ENCODE measurements at regions of chr18 and their contacts with region 1.

Region 1: GRCh38 chr18:22983175-22983574 is 50.0 kb downstream of the RBBP8 start:
- DNase-seq: no peak

Region 2: GRCh38 chr18:22790545-22791309 is 192.4 kb before region 1 on chr18:
- intact Hi-C with region 1: loop called (anchors 10 kb)
- DNase-seq: no peak

Region 3: DNA sequence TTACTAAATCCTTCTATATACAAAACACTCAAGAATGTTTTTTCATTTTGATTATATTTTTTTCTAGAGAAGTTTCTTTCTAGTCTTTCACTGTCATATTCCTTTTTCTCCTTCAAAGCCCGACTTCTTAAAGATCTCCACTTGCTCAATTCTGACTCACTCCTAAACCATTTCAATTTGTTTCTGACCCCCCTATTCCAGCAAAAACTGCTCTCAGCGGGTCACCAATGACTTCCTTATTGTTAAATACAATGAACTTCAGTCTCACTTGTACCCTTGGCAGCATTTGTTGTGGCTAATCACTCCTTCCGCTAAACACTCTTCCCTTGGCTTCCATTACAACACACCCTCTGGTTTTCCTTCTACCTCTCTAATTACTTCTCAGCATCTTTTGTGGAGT is 161.2 kb before region 1 on chr18:
- intact Hi-C with region 1: no loop called
- DNase-seq: no peak

Region 4: DNA sequence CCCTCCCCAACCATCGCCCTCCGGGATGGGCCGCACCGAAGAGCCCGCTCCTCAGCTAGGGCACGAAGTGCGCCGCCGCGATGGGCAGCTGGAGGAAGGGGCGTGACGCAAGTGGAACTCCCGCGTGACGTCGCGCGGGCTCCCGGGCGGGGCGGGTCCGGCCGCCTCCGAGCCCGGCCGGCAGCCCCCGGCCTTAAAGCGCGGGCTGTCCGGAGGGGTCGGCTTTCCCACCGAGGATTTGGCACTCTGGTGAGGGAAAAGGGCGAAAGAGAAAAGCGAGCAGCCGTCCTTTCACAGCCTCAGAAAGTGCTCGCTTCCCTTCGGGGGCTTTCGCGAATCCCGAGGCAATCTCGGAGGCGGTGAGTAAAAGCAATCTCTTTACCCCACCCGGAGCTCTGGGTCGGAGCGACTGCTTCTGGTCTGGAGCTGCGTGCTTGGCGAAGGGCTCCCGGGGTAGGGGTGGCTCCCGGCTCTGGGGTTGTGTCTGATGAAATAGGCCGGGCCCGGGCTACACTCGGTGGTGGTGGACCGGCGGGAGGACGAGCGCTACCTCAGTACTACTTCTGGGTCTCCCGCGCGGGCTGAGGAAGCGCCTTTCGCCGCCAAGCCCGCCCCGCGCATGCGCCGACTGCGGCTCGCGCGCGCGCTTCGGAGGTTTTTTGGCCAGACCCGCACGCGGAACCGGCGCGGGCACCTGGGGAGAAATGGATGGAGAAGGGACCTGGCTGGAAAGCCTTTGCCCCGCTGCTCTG is 49.8 kb before region 1 on chr18 and contains the start of gene RBBP8:
- intact Hi-C with region 1: loop called (anchors 5 kb)
- DNase-seq: peak; percentile 96
- total RNA-seq, gene RBBP8: 7.2 TPM

Region 5: DNA sequence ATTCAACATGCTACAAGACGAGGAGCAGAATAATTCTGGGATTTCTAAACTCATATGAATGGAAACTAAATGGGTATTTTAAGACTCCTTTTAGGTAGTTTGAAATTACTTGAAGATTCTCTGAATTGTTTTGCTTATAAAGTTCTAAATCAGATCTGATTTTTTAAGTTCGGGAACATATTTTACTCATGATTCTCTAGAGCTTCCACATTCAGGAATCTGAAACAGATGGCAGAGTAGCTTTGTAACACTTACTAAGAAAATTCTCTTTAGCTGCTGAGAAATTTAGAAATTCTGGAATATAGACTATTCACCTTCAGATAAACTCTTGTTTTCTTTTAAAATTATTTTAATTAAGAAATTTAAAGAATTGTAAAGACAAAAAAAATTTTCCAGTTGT is 36.3 kb before region 1 on chr18:
- intact Hi-C with region 1: no loop called
- DNase-seq: no peak

Region 6: GRCh38 chr18:23012249-23012648 is 29.1 kb after region 1 on chr18:
- intact Hi-C with region 1: no loop called
- DNase-seq: no peak